Aorta (tissue), 5 donors: ENCODE measurements at regions of chr1 and their contacts with region 1.

Region 1: GRCh38 chr1:48019714-48020315 is 22.6 kb upstream of the TRABD2B start:
- DNase-seq: peak; percentile 92
- ATAC-seq: peak; percentile 90
- H3K4me3 ChIP-seq: no peak overlapping the region
- H3K27ac ChIP-seq: peak overlapping the region in 1 of 2 donors; percentile 73
- H3K4me1 ChIP-seq: peaks cover 2% of the 10 kb centered on the region in 2 donors
- H3K27me3 ChIP-seq: no peaks in the 10 kb centered on the region

Region 2: DNA sequence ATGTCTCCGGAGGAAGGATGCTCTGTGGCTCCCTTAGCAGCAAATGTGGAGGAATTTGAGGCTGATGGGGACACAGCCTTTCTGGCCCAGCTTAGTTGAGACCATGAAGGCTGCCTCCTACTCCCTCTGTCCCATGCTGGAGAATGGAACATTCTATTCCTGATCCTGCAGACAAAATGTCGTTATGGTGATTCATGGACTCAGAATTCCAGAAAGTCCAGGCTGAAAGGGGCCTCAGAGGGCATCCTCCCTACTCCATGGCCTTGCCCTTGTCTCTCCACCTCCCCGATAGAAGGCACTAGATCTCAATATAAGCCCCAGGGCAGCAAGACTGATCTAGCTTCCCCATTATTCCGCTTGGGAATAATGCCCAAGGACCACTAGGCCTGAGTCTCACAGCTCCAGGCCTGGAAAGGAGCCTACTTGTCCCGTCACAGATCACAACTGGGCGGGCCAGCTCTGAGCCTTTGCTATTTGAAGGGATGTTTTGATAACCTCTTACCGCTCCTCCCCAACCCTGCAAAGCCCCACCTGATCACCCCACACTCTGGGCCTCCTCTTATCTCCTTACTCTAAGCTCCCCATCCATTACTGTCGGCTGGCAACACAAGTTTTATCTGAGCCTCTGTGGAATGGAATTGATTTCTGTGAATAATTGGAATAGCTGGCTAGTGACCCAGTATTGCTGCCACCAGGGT is 30.2 kb after region 1 on chr1:
- intact Hi-C with region 1: loop called (anchors 2 to 5 kb)
- DNase-seq: no peak
- ATAC-seq: no peak
- H3K4me3 ChIP-seq: no peak overlapping the region
- H3K27ac ChIP-seq: peak overlapping the region in 1 of 2 donors; percentile 84
- H3K4me1 ChIP-seq: peaks cover 6 to 7% of the 10 kb centered on the region in 2 donors
- H3K27me3 ChIP-seq: no peaks in the 10 kb centered on the region